Right ventricle myocardium inferior (tissue), 1 donor: ENCODE measurements at regions of chr4 and their contacts with region 1.

Region 1: DNA sequence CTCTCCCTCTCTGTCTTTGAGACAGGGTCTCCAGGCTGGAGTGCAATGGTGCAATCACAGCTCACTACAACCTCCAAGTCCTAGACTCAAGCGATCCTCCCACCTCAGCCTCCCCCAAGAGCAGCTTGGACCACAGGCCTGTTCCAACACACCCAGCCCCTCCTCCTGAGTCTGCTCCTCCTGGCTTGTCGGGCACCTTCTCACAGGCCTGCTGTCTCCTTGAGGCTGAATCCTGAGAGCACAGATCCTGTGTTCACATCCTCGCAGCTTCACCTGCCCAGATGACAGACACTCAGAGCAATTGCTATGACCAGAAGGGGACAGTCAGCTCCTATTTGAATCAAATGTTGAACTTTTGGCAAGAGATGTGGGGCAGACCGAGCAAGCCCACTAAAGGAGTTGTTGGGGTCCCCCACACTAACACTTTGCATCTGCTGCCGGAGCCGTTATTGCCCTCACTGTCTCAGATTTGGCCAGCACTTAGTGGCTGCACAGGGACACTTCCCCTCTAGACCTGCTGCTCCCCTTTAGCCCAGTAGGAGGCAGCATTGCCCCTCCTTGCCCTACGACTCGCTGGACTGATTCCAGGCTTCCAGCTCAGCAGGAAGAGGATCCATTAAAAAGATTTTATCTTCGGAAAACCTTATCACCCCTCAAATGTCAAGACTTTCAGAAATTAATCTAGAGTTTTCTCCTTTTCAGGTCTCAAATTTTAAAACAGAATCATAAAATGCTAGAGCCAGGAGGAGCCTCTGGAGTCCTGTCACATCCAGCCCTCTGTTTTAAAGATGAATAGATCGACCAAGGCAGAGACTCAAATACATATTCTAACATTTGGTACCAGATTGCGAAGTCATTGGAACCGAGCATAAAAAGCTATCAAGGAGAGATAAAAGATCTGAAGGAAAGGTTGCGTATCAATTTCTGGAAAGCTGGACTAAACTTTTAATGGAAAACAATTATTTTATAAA is 113.7 kb downstream of the USP46 start:
- DNase-seq: peak; percentile 75
- ATAC-seq: peak; percentile 84

Region 2: GRCh38 chr4:52507774-52508173 is 37.6 kb before region 1 on chr4:
- intact Hi-C with region 1: no loop called
- DNase-seq: no peak
- ATAC-seq: peak; percentile 85

Region 3: DNA sequence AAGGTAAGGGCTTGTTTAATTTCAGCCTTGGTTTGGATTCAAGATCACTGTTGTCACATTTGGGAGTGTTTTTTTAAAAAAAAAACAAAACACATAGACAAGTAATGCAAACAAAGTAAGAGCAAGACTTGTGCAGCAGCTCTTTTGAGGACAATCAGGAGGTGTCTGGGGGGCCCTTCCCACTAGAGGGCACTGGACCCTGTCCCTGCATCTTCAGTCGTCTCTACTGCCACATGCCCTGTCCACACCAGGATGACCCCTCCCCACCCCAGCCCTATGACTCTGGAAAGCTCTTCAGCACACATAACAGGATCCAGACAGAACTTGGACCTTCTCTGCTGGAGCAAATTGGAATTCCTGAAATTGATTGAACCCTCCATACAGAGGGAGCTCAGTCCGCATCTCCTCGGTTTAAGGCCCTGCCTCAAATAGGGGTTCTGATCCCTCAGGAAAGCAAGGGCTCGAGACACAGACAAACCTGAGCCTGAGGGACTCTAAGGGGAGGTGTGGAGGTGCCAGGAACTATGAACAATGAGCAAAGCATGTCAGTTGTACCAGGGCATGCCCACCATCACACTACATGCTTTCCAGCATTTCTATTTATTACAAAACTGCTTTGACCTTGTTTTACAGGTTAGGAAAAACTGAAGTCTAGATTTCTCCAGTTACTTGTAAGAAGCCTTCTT is 42.9 kb after region 1 on chr4:
- intact Hi-C with region 1: loop called (anchors 5 kb)
- DNase-seq: no peak
- ATAC-seq: peak; percentile 44

Region 4: GRCh38 chr4:52659001-52659721 is 113.8 kb after region 1 on chr4 and contains the start of gene USP46:
- intact Hi-C with region 1: loop called (anchors 5 kb)
- DNase-seq: peak; percentile 86
- ATAC-seq: peak; percentile 95
- total RNA-seq, gene USP46: 65.1 TPM

Region 5: DNA sequence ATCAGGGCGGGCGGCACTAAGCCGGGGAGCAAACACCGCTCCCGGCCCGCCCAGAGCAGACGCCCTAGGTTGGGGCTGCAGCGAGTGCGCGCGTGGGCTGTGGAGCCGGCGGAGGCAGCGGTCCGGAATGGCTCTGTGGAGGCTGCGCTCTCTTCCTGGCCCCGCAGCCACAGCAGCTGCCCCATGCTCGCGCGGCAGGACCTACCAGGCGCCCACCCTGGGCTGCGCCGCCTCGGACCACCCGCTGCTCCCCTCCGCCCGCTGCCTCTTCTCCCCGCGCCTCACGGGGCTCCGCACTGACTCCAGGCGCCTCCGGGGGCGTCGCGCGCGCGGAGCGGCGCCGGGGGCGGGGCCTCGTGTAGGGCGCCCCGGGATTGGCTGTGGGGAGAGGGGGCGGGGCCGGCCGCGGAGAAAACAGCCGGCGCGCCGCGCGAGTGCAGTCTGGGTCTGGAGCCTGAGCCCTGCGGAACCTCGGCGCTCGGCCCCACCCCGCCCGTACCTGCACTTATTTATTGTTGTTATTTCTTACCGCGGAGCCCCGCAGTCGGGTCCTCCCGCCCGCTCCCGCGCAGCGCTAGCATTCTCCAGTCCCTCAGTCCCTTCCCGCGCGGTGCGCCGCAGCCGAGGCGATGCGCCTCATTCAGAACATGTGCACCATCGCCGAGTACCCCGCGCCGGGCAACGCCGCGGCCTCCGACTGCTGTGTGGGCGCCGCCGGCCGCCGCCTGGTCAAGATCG is 316.7 kb after region 1 on chr4 and contains the start of gene RASL11B:
- intact Hi-C with region 1: loop called (anchors 5 kb)
- DNase-seq: peak; percentile 90
- ATAC-seq: peak; percentile 99
- total RNA-seq, gene RASL11B: 3.7 TPM